Mammary epithelial cell (primary cell): ENCODE measurements at regions of chr7 and their contacts with region 1.

Region 1: GRCh38 chr7:74083117-74083876 is at the start of gene LIMK1:
- DNase-seq: peak; percentile 62
- H3K4me3 ChIP-seq: peak within 1 kb of the TSS; percentile 56 to 94 (median 62)
- H3K27ac ChIP-seq: peak within 1 kb of the TSS; percentile 75
- H3K4me1 ChIP-seq: peaks cover 27% of the 10 kb centered on the region
- H3K27me3 ChIP-seq: no peaks in the 10 kb centered on the region
- CTCF ChIP-seq: no peak
- total RNA-seq, gene LIMK1: 23.8 to 31.0 TPM

Region 2: DNA sequence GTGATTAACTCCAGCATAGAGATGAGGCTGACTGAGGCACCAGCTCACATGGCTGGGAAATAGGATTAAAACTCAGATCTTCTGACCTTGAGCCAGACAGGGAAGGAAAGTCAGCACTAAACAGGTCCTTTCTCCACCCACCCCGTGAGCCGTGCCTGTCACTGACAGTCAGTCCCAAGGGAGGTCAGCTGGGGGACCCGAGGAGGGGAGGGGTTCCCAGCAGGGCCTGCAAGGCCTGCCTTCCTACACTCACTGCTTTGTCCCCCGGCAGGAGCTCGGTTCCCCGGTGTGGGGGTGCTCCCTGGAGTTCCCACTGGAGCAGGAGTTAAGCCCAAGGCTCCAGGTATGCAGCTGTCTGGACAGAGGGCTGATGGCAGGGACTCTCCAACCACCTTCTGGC is 38.3 kb before region 1 on chr7:
- CTCF ChIA-PET with region 1: no interaction called
- dilution Hi-C with region 1: loop called (anchors 5 kb)
- in situ Hi-C with region 1: no loop called
- intact Hi-C with region 1: no loop called
- DNase-seq: no peak
- H3K4me3 ChIP-seq: no peak overlapping the region
- H3K27ac ChIP-seq: no peak overlapping the region
- H3K4me1 ChIP-seq: peaks cover 5% of the 10 kb centered on the region
- H3K27me3 ChIP-seq: no peaks in the 10 kb centered on the region
- CTCF ChIP-seq: no peak